Colonic mucosa (tissue), 4 donors: ENCODE measurements at regions of chr10 and their contacts with region 1.

Region 1: GRCh38 chr10:110137142-110137545 is 70.3 kb upstream of the MXI1 start:
- DNase-seq: no peak
- H3K4me3 ChIP-seq: no peak overlapping the region
- H3K27ac ChIP-seq: no peak overlapping the region
- H3K4me1 ChIP-seq: no peaks in the 10 kb centered on the region
- H3K27me3 ChIP-seq: no peaks in the 10 kb centered on the region
- CTCF ChIP-seq: peak; percentile 69

Region 2: DNA sequence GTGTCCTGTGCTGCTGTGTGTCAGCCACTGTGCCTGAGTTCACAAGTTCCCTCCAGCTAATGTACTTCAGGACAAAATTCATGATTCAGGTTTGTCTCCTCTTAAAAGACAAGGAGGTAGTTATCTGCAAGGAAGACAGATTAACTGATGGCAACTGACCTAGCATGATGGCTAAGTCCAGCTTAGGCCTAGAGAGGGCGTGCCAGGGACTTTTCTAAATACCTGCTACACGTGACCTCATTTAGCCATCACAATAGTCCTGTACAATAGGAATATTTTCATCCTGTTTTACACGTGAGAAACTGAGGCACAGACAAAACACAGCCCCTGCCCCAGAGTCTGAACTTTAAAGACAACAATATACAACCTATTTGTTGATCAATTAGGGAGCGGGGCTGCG is 489.5 kb before region 1 on chr10:
- intact Hi-C with region 1: no loop called
- DNase-seq: peak; percentile 46
- H3K4me3 ChIP-seq: no peak overlapping the region
- H3K27ac ChIP-seq: no peak overlapping the region
- H3K4me1 ChIP-seq: no peaks in the 10 kb centered on the region
- H3K27me3 ChIP-seq: no peaks in the 10 kb centered on the region
- CTCF ChIP-seq: no peak

Region 3: DNA sequence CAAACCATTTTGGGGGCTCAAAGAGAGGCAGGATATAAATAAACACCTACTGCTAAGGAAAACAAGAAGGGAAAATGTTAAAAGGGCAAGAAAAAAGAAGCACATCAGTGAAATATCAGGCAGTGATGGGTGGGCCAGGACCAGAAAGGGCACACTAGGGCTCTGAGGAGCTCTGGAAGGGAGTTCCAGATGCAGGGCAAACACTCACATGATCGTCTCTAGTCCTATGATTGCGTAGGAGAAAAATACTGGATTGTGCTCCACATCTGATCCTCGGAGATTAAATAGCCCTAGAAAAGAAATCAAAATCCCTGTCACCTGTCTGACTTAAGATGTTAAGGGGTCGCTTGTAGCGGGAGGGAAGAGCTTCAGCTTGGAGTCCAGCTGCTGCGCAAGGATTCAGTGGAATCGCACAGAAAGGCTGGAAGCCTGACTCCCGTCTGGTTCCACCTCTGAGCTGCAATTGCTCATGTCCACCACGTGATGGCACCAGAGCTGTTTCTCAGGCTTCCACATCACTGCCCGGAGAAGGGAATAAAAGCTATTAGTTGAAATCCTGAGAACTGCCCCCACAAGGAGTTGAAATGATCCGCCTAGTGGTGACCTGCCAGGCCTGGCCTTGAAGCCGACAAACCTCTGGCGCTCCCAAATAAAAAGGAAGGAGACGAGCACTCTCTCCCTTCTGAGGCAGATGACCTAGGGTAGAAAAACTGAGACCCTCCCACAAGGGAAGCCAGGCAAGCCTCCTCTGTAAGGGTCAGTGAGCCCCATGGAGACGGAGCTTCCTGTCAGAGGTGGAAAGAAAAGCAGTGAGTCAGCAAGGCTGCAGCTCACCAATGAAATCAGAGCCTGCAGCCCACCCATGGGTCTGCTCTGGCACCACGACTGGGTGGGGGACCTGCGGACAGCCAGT is 253.0 kb before region 1 on chr10:
- intact Hi-C with region 1: loop called (anchors 10 kb)
- DNase-seq: peak; percentile 58
- H3K4me3 ChIP-seq: no peak overlapping the region
- H3K27ac ChIP-seq: no peak overlapping the region
- H3K4me1 ChIP-seq: no peaks in the 10 kb centered on the region
- H3K27me3 ChIP-seq: no peaks in the 10 kb centered on the region
- CTCF ChIP-seq: peak; percentile 93

Region 4: DNA sequence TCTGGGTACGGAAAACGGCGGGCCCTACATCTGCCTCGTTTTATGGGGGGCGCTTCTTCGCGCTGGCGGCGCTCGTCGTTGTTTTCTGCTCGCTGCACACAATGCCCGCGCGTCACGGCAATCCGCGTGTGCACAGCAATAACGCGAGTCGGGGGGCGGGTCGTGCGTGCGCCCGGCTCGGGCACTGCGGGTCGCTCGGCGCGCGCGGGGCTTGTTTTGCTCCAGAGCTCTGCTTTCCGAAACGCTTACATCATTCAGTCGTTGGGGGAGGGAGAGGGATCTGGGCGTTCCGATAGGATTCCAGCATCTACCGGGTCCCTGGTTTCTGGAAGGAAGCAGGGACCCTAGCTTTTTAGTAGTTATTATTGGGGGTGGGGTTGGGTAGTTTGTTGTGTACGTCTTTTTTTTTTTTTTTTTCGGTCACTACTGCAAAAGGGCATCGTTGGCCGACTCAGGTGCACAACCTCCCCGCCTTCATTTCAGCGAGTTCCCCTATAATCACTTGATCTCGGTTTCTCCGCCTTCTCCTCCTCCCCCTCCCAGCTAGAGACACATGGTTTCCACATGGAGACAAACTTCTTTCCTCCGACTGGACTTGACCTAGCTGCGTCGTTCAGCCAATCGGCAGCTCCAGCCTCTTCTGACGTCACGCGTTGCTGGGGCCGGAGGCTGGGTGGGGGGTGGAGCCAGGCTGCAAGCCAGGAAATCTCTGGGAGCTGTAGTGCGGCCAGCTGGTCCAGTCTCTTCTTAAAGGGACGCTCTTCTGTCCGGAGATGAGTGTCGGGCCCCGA is 73.7 kb after region 1 on chr10:
- intact Hi-C with region 1: loop called (anchors 5 kb)
- DNase-seq: peak; percentile 98
- H3K4me3 ChIP-seq: peak overlapping the region; percentile 70
- H3K27ac ChIP-seq: peak overlapping the region; percentile 85
- H3K4me1 ChIP-seq: peaks cover 10% of the 10 kb centered on the region
- H3K27me3 ChIP-seq: no peaks in the 10 kb centered on the region
- CTCF ChIP-seq: no peak

Region 5: GRCh38 chr10:110225756-110226542 is 88.8 kb after region 1 on chr10:
- intact Hi-C with region 1: loop called (anchors 5 kb)
- DNase-seq: peak; percentile 93
- H3K4me3 ChIP-seq: peak overlapping the region; percentile 56
- H3K27ac ChIP-seq: peak overlapping the region; percentile 91
- H3K4me1 ChIP-seq: no peaks in the 10 kb centered on the region
- H3K27me3 ChIP-seq: no peaks in the 10 kb centered on the region
- CTCF ChIP-seq: peak; percentile 59

Region 6: GRCh38 chr10:110279407-110279986 is 142.4 kb after region 1 on chr10:
- intact Hi-C with region 1: loop called (anchors 1 kb)
- DNase-seq: peak; percentile 65
- H3K4me3 ChIP-seq: no peak overlapping the region
- H3K27ac ChIP-seq: no peak overlapping the region
- H3K4me1 ChIP-seq: peaks cover 3% of the 10 kb centered on the region
- H3K27me3 ChIP-seq: no peaks in the 10 kb centered on the region
- CTCF ChIP-seq: peak; percentile 60